Activated CD8-positive, alpha-beta memory T cell treated with anti-CD3 and anti-CD28 coated beads, Interleukin-2, amount 10 ng/mL, durations not matched to agents 7 days and 5 days (primary cell): ENCODE measurements at regions of chrX and their contacts with region 1.

Region 1: DNA sequence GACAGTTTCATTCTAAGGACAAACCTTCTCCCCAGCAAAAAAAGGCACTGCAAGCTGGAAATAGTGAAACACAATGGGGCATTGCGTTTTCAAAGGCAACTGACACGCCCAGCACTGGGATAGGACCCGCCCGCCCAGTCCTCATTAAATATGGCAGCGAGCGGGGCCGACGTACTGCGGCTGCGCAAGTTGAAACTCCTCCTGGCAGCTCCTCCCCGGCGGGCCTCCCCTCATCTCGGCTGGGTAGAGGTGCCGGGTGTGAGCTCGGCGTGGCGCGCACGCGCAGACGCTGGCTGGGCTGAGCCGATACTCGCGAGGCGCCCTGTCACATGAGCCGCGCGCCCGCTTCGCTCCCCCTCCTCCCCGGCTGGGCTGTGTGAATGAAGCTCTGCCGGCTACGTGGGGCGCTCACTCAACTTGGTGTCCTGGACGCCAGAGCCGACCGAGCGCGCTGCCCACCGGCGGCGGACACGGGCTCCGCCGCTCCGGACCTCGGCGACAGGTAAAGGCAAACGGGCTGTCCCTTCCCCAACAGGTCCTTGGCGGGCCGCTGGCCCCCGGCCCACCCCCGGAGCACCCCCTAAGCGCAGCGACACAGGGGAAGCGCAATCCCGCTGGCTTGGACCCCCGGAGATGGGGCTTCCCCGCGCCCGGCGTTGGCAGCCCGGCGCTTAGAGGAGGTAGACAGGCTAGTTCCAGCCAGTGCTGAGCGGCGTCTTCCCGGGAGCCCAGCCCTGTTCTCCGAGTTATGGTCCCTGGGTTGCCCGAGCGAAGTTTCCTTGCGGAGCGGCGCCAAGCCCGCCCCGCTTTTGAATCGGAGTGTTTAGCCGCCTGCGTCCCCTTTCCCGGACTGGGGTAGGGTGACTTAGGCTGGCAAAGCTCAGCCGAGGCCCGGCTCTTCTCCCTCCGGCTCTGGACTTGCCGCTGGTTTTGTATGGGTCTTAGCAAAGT is at the start of gene CLCN5:
- DNase-seq: peak; percentile 96
- ATAC-seq: peak; percentile 98
- H3K4me3 Mint-ChIP-seq: peak within 1 kb of the TSS; percentile 72
- H3K27ac Mint-ChIP-seq: peak within 1 kb of the TSS; percentile 75
- H3K4me1 Mint-ChIP-seq: peaks cover 9% of the 10 kb centered on the region
- H3K27me3 Mint-ChIP-seq: no peaks in the 10 kb centered on the region
- total RNA-seq, gene CLCN5: 4.0 to 5.3 TPM

Region 2: DNA sequence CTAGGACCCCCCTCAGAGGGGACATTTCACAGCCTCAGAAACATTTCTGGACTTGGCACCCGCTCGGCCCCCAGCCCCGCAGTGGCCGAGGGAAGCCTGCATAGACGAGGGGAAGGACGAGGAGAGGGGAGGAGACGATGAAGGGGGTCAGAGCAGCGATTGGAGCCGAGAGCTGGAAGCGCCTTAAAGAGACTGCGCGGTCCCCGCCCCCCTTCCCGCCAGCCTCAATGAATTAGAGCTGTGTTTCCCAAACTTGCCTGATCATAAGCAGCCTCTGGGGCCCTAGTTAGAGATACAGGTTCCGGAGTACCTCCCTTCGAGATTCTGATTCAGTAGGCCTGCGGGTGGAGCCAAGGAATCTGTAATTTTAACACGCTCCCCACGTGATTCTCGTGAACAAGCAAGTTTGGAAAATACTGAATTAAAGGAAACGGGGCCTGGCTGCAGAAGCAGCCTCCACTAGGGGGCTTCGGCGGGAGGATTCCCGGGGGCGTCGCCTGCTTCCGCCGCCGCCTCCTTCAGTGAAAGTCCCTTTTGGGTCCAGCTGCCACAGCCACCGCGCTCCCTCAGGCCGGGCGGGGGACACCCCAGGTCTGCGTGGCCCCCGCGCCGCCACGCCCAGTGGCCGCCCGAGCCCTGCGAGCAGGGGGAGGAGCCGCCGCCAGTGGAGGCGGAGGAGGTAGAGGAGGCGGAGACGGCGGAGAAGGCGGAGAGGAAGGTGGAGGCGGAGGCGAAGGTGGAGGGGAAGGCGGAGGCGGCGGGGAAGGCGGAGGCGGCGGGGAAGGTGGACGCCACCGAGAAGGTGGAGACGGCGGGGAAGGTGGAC is 43.5 kb before region 1 on chrX and contains the start of gene USP27X:
- CTCF ChIA-PET with region 1: interaction called, 29 read pairs
- DNase-seq: peak; percentile 83
- ATAC-seq: peak; percentile 96
- H3K4me3 Mint-ChIP-seq: peak within 1 kb of the TSS; percentile 72
- H3K27ac Mint-ChIP-seq: peak within 1 kb of the TSS; percentile 52
- H3K4me1 Mint-ChIP-seq: peaks cover 17% of the 10 kb centered on the region
- H3K27me3 Mint-ChIP-seq: no peaks in the 10 kb centered on the region
- total RNA-seq, gene USP27X: 1.0 to 1.7 TPM

Region 3: DNA sequence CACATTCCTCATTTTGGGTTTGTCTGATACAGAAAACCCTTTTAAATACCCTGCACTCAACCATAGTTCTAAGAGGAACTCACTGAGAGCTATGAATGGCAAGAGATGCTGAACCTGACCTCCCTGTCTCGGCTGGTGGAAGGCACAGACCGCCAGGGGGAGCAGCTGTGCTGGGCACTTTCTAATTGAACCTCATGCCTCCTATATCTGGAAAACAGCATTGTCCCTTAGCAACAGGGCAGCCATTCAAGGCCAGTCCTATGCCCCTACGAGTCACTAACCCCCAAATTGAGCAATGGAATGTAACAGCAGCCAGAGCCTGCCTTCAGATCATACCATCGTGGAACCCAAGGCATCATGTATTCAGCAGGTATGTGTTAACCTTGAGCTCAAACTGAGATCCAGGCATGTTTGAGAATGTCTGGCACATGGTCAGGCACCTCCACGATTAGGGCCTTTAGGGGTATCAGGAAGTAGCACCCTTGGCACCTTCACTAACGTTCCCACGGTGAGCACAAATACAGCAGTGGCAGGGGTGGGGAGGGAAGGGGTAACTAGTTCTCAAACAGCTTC is 38.2 kb before region 1 on chrX:
- CTCF ChIA-PET with region 1: interaction called, 29 read pairs
- DNase-seq: peak; percentile 68
- ATAC-seq: peak; percentile 20
- H3K4me3 Mint-ChIP-seq: no peak overlapping the region
- H3K27ac Mint-ChIP-seq: no peak overlapping the region
- H3K4me1 Mint-ChIP-seq: peaks cover 6% of the 10 kb centered on the region
- H3K27me3 Mint-ChIP-seq: peaks cover 5% of the 10 kb centered on the region

Region 4: DNA sequence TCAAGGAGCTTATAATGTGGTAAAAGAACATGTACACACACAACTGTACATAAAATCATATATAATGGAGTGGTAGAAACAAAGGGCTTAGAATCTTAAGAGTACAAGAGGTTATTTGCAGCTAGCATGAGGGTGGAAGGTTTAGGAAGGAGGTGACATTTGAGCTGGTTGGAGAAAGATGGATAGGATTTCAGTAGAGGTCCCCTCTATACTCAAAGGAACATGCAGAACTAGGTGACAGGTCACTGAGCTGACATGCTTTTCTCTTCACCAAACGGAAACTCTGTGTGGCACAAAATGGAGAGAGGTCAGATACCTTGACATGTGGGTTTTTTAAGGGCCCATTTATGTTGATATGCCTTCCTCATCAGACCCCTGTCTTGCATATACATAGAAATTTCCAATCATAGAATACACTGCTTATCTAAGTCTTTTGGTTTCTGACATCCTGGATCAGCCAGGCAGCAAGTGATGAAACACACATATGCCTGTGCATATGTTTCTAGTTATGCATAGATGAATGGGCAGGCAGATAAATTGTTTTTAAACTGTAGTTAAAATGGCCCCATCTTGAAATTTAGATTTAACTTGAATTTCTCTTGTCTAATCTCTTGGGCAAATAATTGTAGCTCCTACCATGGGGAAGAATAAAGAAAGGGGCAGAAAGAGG is 29.1 kb after region 1 on chrX:
- CTCF ChIA-PET with region 1: no interaction called
- DNase-seq: no peak
- ATAC-seq: no peak
- H3K4me3 Mint-ChIP-seq: no peak overlapping the region
- H3K27ac Mint-ChIP-seq: no peak overlapping the region
- H3K4me1 Mint-ChIP-seq: peaks cover 4% of the 10 kb centered on the region
- H3K27me3 Mint-ChIP-seq: no peaks in the 10 kb centered on the region

Region 5: GRCh38 chrX:50054145-50054544 is 131.6 kb after region 1 on chrX:
- CTCF ChIA-PET with region 1: no interaction called
- DNase-seq: no peak
- ATAC-seq: no peak
- H3K4me3 Mint-ChIP-seq: no peak overlapping the region
- H3K27ac Mint-ChIP-seq: no peak overlapping the region
- H3K4me1 Mint-ChIP-seq: no peaks in the 10 kb centered on the region
- H3K27me3 Mint-ChIP-seq: no peaks in the 10 kb centered on the region